ENCODE measurements at regions of chr7 and their contacts with region 1.

Region 1: DNA sequence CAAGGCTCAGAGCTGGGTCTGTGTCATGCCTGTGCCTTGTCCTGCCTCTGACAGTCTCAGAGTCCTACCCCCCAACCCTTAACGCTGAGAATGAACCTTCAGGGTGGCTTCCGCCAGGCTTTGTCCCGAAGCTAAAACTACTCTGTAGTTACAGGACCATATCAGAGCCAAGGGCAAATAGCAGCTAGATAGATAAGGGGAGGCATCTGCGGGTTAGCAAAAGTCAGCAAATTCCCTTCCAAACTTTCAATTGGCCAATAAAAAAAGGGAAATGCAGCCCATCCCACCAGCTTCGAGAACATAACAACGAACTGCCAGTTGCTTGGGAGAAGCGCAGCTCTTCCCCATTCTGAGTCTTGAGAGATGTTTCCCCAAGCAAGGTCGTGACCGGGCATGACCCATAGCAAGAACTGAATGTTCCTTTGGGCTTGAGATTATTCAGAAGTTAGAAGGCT is 17.7 kb downstream of the CCL24 start:
- DNase-seq: peak; percentile 75 to 95 (median 92)
- H3K4me3 ChIP-seq: no peak overlapping the region
- H3K27ac ChIP-seq: peak overlapping the region; percentile 68 to 88
- H3K4me1 ChIP-seq: peaks cover 30% of the 10 kb centered on the region
- H3K27me3 ChIP-seq: no peaks in the 10 kb centered on the region
- CTCF ChIP-seq: no peak
- EP300 ChIP-seq: peak; percentile 79
- POLR2A ChIP-seq: no peak

Region 2: DNA sequence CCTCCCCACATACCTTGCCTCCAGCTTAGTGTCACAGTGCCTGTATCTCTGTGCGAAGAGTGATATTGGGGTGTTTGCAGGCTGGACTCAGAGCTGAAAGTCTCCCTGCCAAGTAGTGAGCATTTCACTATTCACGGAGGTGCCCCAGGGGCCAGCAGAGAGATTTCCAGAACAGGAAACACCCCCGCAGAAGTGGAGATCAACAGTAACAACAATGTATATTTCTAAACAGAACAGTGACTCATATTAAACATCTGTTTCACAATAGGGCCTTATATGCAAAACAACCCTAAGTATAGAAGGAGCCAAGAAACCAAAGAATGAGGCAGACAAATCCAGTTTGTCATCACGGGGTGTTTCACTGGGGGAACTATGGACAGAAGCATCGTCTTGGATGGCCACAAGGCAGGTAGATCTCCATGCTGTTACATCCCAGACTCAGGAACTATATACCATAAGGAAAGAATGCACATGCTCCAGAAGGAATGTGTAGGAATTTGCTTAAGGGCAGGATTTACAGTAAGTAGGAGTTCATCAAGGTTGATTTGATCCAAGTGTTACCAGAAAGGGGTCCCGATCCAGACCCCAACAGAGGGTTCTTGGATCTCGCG is 47.1 kb after region 1 on chr7:
- intact Hi-C with region 1: loop called in 1 of 4 experiments (anchors 10 kb)
- DNase-seq: peak in 4 of 5 donors; percentile 25 to 52 (median 36)
- H3K4me3 ChIP-seq: no peak overlapping the region
- H3K27ac ChIP-seq: peak overlapping the region; percentile 38 to 72
- H3K4me1 ChIP-seq: peaks cover 9% of the 10 kb centered on the region
- H3K27me3 ChIP-seq: no peaks in the 10 kb centered on the region
- CTCF ChIP-seq: no peak
- EP300 ChIP-seq: no peak
- POLR2A ChIP-seq: no peak

Region 3: DNA sequence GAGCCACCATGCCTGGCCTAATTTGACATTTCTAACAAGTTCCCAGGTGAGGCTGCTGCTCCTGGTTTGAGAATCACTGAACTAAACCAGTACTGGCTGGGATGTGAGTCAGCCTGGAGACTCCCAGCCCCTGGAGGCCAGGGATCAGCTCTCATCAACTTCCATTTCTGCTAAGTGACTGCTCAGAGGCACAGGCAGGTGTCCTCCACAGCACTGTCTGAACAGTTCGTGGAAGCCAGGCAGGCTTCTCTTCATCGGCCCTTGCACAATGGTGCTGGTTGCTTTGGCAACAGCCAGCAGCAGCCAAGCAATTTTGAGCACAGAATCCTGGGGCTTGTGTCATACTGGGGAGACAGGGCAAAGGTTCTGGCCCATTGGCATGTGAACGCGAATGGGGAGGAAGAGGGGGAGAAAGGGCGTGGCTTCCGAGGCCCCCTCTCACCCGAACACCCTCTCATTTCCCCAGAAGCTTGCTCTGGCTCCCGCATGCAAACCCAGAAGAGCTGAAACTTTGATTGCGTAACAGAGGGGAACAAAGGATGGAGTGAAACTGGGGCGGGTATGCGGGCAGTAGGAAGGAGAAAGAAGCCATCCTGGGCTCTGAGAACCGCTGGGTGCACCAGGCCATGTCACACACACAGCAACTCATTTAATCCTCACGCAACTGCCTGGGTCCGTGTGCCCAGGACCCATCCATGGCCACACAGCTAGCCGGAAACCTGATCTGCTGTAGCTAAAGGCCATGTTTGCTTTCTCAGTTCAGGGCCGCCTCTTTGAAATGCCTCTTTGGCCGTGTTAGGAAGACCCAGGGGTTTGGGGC is 110.1 kb after region 1 on chr7:
- intact Hi-C with region 1: no loop called
- DNase-seq: peak; percentile 57 to 89 (median 81)
- H3K4me3 ChIP-seq: no peak overlapping the region
- H3K27ac ChIP-seq: peak overlapping the region in 1 of 2 donors; percentile 69
- H3K4me1 ChIP-seq: peaks cover 7% of the 10 kb centered on the region
- H3K27me3 ChIP-seq: no peaks in the 10 kb centered on the region
- CTCF ChIP-seq: no peak
- EP300 ChIP-seq: peak; percentile 68
- POLR2A ChIP-seq: no peak